ENCODE measurements at regions of chr17 and their contacts with region 1.

Region 1: GRCh38 chr17:28644985-28645939 is at the start of gene BLTP2:
- DNase-seq: peak; percentile 92 to 95 (median 93)
- H3K4me3 ChIP-seq: peak within 1 kb of the TSS; percentile 77 to 97 (median 89)
- H3K4me3 Mint-ChIP-seq: peak within 1 kb of the TSS; percentile 80 to 97
- H3K27ac ChIP-seq: peak within 1 kb of the TSS; percentile 83 to 96
- H3K27ac Mint-ChIP-seq: peak within 1 kb of the TSS; percentile 92 to 98 (median 96)
- H3K4me1 ChIP-seq: peaks cover 26 to 34% of the 10 kb centered on the region in 2 donors
- H3K4me1 Mint-ChIP-seq: peaks cover 31% of the 10 kb centered on the region
- H3K27me3 ChIP-seq: no peaks in the 10 kb centered on the region
- H3K27me3 Mint-ChIP-seq: peaks cover 0 to 4% (median 0%) of the 10 kb centered on the region in 3 donors
- CTCF ChIP-seq: no peak
- polyA plus RNA-seq, gene BLTP2: 46.8 to 69.2 (median 53.2) TPM

Region 2: GRCh38 chr17:28282596-28282995 is 362.7 kb before region 1 on chr17:
- intact Hi-C with region 1: no loop called
- DNase-seq: no peak
- H3K4me3 ChIP-seq: no peak overlapping the region
- H3K4me3 Mint-ChIP-seq: peak overlapping the region in 1 of 2 donors; percentile 18
- H3K27ac ChIP-seq: no peak overlapping the region
- H3K27ac Mint-ChIP-seq: peak overlapping the region in 1 of 7 donors; percentile 49
- H3K4me1 ChIP-seq: peaks cover 0 to 9% of the 10 kb centered on the region in 2 donors
- H3K4me1 Mint-ChIP-seq: peaks cover 10% of the 10 kb centered on the region
- H3K27me3 ChIP-seq: peaks cover 2 to 16% of the 10 kb centered on the region in 2 donors
- H3K27me3 Mint-ChIP-seq: peaks cover 21 to 45% (median 22%) of the 10 kb centered on the region in 3 donors
- CTCF ChIP-seq: no peak

Region 3: GRCh38 chr17:28598799-28599310 is 46.4 kb before region 1 on chr17 and contains the start of gene SPAG5:
- intact Hi-C with region 1: no loop called
- DNase-seq: peak; percentile 92 to 93 (median 93)
- H3K4me3 ChIP-seq: peak within 1 kb of the TSS; percentile 62 to 82 (median 69)
- H3K4me3 Mint-ChIP-seq: peak within 1 kb of the TSS; percentile 91 to 94
- H3K27ac ChIP-seq: peak within 1 kb of the TSS; percentile 87 to 100
- H3K27ac Mint-ChIP-seq: peak within 1 kb of the TSS; percentile 96 to 99 (median 97)
- H3K4me1 ChIP-seq: peaks cover 20 to 25% of the 10 kb centered on the region in 2 donors
- H3K4me1 Mint-ChIP-seq: peaks cover 26% of the 10 kb centered on the region
- H3K27me3 ChIP-seq: no peaks in the 10 kb centered on the region
- H3K27me3 Mint-ChIP-seq: peaks cover 0 to 3% (median 0%) of the 10 kb centered on the region in 3 donors
- CTCF ChIP-seq: no peak
- polyA plus RNA-seq, gene SPAG5: 7.7 TPM in 1 of 3 donors, not detected in the others

Region 4: DNA sequence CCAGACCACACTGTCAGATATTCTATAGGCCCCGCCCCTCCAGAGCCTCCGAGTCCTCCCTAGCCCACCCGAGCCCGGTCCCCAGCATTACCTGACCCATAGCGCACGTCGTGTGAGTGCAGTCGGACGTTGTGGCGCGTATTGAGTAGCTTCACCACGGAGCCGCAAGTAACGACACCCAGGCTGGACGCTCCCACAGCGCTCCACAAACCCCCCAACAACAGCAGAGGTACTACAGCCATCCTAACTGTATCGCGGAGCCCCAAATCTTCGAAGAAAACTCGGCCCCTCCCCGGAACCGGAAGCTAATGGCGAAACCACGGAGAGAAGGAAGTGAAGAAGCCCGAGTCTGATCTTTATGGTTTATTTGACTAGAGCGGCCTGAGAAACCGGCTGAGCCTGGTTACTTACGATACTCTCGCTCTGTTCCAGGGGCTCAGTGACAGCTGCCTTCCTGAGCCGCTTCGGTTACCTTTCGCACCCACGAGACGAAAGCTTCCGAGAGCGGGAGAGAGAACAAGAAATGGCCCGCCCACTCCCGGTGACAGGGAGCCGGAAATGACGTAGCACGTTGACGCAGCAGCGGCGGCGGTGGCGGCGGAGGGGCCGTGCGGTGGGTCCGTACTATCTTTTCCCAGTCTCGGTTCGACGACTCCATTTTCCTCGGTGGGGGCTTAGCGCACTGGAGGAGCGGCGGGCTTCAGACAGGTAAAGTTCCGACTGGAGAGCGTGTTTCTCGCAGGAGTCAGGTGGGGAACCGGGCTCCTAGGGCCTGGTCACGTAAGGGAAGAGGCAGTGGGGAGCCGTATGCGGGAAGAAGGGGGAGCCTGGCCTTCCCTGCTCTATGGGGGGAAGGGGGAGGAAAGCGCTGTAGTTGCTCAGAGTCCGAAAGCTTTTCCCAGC is 16.6 kb after region 1 on chr17 and contains the starts of genes SDF2 and SUPT6H:
- intact Hi-C with region 1: loop called in 1 of 2 experiments (anchors 2 kb)
- DNase-seq: peak; percentile 88 to 90 (median 88)
- H3K4me3 ChIP-seq: peak within 1 kb of the TSS; percentile 64 to 91 (median 71)
- H3K4me3 Mint-ChIP-seq: peak within 1 kb of the TSS; percentile 97 to 99
- H3K27ac ChIP-seq: peak within 1 kb of the TSS; percentile 93 to 99
- H3K27ac Mint-ChIP-seq: peak within 1 kb of the TSS; percentile 99 to 100 (median 100)
- H3K4me1 ChIP-seq: peaks cover 19 to 24% of the 10 kb centered on the region in 2 donors
- H3K4me1 Mint-ChIP-seq: peaks cover 35% of the 10 kb centered on the region
- H3K27me3 ChIP-seq: no peaks in the 10 kb centered on the region
- H3K27me3 Mint-ChIP-seq: peaks cover 0 to 2% (median 0%) of the 10 kb centered on the region in 3 donors
- CTCF ChIP-seq: no peak
- polyA plus RNA-seq, gene SDF2: 52.9 to 103 (median 84.5) TPM
- polyA plus RNA-seq, gene SUPT6H: 3.8 to 33.9 (median 7.8) TPM

Region 5: DNA sequence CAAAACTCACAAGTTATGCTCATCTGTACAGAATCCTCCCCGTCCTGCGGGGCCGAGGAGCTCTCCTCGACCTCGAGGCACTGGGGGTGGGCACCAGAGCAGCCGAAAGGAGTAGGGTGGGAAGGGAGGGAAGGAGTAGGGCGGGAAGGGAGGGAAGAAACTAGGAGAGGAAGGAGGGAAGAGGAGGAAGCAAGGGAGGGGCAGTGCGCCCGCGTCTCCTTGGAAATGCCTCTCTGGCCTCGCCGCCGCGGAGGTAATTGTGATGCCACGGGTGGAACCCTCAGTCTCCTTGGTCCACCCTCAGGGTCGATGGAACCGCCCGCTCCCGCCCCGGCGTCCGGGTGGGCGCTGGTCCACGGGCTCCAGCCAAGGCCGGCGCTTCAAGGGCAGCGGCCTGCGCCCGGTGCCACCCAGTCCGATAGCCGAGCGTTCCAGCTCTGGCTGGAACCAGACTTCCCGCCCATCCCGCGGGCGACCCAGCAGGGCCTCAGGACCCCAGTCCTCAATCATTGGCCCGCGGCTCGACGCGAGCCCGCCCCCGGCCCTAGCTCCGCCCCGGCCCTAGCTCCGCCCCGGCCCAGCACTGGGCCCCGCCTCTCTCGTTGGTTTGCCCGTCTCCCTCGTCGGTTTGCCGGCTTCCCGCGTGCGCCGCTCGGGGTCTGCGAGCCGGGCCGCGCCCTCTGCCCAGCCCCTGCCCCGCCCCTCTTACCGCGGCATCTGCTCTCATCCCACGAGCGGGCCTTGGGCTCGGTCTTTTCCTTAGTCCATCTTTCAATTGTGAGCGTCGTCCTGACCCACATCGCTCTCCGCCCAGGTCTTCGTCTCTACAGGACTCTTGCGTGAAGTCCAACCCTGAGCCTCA is 65.8 kb after region 1 on chr17:
- intact Hi-C with region 1: loop called (anchors 5 to 10 kb)
- DNase-seq: peak; percentile 54 to 69 (median 64)
- H3K4me3 ChIP-seq: peak overlapping the region; percentile 63 to 92 (median 80)
- H3K4me3 Mint-ChIP-seq: peak overlapping the region; percentile 88 to 93
- H3K27ac ChIP-seq: peak overlapping the region; percentile 75 to 85
- H3K27ac Mint-ChIP-seq: peak overlapping the region; percentile 83 to 95 (median 92)
- H3K4me1 ChIP-seq: peaks cover 15 to 18% of the 10 kb centered on the region in 2 donors
- H3K4me1 Mint-ChIP-seq: peaks cover 22% of the 10 kb centered on the region
- H3K27me3 ChIP-seq: no peaks in the 10 kb centered on the region
- H3K27me3 Mint-ChIP-seq: peaks cover 0 to 4% (median 1%) of the 10 kb centered on the region in 3 donors
- CTCF ChIP-seq: no peak

Region 6: DNA sequence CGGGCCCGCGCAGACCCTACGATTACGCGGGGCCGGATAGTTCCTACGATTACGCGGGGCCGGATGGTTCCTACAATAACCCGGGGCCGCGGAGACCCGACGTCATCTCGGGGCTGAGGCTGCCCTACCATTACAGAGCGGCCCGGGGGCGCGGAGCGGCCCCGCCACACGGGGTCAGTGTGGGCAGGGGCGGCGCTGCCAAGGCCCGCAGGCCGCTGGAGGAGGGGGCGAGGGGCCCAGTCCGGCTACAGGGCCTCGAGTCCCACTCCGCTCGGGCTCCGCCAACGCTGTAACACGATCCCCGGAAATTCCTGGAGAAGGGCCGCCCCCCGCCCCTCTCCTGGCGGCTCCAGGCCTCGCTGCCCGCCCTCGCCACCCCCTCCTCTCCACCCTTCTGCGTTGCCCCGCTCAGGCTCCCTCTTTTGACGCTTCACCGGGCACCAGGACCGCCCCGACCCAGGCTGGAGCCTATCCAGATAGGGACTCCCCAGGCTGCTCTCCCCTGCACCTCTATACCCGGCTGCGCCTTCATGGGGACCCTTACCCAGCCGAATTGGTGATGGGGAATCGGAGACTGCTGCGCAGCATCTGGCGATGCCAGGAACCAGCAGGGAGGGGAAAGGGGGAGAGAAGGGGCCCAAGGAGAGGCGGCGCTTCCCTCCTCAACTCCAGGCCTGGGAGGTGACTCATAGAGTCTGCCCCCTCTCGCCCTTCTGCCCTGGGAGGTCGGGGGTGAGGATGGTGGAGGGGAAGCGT is 72.5 kb after region 1 on chr17 and contains the start of gene RAB34:
- intact Hi-C with region 1: loop called (anchors 5 to 10 kb)
- DNase-seq: peak; percentile 66 to 80 (median 70)
- H3K4me3 ChIP-seq: peak within 1 kb of the TSS; percentile 50 to 78 (median 55)
- H3K4me3 Mint-ChIP-seq: peak within 1 kb of the TSS; percentile 93 to 94
- H3K27ac ChIP-seq: peak within 1 kb of the TSS; percentile 5 to 61
- H3K27ac Mint-ChIP-seq: peak within 1 kb of the TSS; percentile 83 to 92 (median 89)
- H3K4me1 ChIP-seq: peaks cover 45 to 56% of the 10 kb centered on the region in 2 donors
- H3K4me1 Mint-ChIP-seq: peaks cover 37% of the 10 kb centered on the region
- H3K27me3 ChIP-seq: no peaks in the 10 kb centered on the region
- H3K27me3 Mint-ChIP-seq: peaks cover 0 to 5% (median 2%) of the 10 kb centered on the region in 3 donors
- CTCF ChIP-seq: peak; percentile 20
- polyA plus RNA-seq, gene RAB34: 66.7 to 93.3 (median 79.1) TPM

Measured in CD14-positive monocyte (primary cell).